Dorsolateral prefrontal cortex (tissue), 120 donors: ENCODE measurements at regions of chr5 and their contacts with region 1.

Region 1: GRCh38 chr5:65742565-65743231 is 20.7 kb downstream of the NLN start:
- DNase-seq: no peak
- H3K4me3 ChIP-seq: no peak overlapping the region
- H3K27ac ChIP-seq: no peak overlapping the region
- H3K27me3 ChIP-seq: no peaks in the 10 kb centered on the region
- CTCF ChIP-seq: peak; percentile 31 to 77 (median 62)

Region 2: DNA sequence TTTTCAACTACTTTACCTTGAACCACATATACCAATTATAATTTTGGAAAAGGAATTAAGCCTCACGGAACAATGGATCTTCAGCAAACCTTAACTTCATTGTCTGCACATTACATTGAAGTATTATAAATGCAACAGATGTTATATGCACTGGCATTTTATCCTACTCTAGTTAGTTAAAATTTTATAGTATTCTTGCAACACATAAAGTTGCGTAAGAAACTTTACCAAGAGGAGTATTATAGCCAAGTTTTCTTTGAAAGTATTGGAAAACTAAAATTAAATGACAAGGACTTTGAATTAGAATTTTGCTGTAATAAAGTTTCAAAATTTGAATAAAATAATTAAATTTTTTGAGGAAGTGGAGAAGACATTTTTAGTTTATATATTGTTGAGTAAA is 338.0 kb after region 1 on chr5:
- intact Hi-C with region 1: loop called in 1 of 2 experiments (anchors 10 kb)
- DNase-seq: no peak
- H3K4me3 ChIP-seq: no peak overlapping the region
- H3K27ac ChIP-seq: no peak overlapping the region
- H3K27me3 ChIP-seq: no peaks in the 10 kb centered on the region
- CTCF ChIP-seq: no peak